Calu3 (cell line): ENCODE measurements at regions of chr18 and their contacts with region 1.

Region 1: GRCh38 chr18:12336875-12337274 is 28.8 kb downstream of the TUBB6 start:
- DNase-seq: peak; percentile 41
- H3K4me3 Mint-ChIP-seq: peak overlapping the region; percentile 34
- H3K27ac Mint-ChIP-seq: peak overlapping the region; percentile 77
- H3K4me1 Mint-ChIP-seq: peaks cover 22% of the 10 kb centered on the region
- H3K27me3 Mint-ChIP-seq: no peaks in the 10 kb centered on the region
- CTCF ChIP-seq: no peak

Region 2: DNA sequence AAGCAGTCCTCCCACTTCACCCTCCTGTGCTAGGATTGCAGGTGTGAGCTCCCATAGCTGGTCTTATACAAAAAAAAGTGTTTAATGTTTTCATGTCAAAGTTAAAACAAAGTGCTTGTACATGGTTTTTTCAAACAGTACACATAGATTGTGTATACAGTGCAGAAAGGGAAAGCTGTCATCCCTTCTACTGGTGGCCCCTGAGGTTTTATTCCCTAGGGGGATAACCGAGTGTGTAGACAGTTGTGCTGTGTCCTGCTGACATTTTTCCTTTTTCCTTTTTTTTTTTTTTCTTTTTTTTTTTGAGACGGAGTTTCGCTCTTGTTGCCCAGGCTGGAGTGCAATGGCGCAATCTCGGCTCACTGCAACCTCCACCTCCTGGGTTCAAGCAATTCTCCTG is 18.0 kb before region 1 on chr18:
- CTCF ChIA-PET with region 1: interaction called, 10 read pairs
- intact Hi-C with region 1: no loop called
- DNase-seq: no peak
- H3K4me3 Mint-ChIP-seq: no peak overlapping the region
- H3K27ac Mint-ChIP-seq: no peak overlapping the region
- H3K4me1 Mint-ChIP-seq: no peaks in the 10 kb centered on the region
- H3K27me3 Mint-ChIP-seq: no peaks in the 10 kb centered on the region
- CTCF ChIP-seq: no peak

Region 3: GRCh38 chr18:12726774-12727550 is 390.1 kb after region 1 on chr18:
- CTCF ChIA-PET with region 1: no interaction called
- intact Hi-C with region 1: no loop called
- DNase-seq: peak; percentile 80
- H3K4me3 Mint-ChIP-seq: no peak overlapping the region
- H3K27ac Mint-ChIP-seq: no peak overlapping the region
- H3K4me1 Mint-ChIP-seq: no peaks in the 10 kb centered on the region
- H3K27me3 Mint-ChIP-seq: no peaks in the 10 kb centered on the region
- CTCF ChIP-seq: peak; percentile 91

Region 4: DNA sequence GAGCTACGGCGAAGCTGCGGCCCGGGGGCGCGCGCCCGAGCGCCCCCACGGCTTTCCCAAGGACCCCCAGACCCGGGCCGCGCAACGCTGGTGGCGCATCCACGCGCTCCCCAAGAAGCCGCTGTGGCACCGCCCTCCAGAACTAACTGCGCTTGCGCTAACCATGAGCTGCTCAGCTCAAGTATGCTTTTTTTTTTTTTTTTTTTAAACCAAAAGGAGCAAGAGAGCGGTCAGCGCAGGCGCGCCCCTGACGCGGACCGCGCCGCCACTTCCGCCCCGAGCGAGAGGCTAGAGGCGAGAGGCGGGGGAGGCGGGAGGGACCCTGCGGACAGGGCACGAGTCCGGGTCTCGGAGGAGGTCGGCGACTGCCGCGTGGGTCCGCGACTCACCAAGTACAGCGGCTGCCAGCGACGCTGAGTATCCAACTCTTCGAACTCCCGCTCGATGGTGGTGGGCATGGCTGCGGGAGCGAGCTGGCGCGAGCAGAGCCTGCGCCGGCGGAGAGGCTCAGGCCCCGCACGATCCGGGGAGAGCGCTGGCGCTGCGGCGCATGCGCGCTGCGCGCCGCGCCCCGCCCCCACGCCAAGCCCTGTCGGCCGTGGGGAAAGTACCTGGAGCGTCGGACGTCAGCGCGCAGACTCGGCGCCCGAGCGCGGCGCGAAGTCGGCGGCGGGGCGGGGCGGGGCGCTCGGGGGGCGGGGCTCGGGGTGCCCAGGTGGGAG is 547.0 kb after region 1 on chr18 and contains the start of gene PTPN2:
- CTCF ChIA-PET with region 1: no interaction called
- intact Hi-C with region 1: no loop called
- DNase-seq: peak; percentile 90
- H3K4me3 Mint-ChIP-seq: peak within 1 kb of the TSS; percentile 90
- H3K27ac Mint-ChIP-seq: peak within 1 kb of the TSS; percentile 98
- H3K4me1 Mint-ChIP-seq: peaks cover 47% of the 10 kb centered on the region
- H3K27me3 Mint-ChIP-seq: no peaks in the 10 kb centered on the region
- CTCF ChIP-seq: no peak
- total RNA-seq, gene PTPN2: 58.1 and 61.5 TPM in 2 replicates